Mammary epithelial cell (primary cell): ENCODE measurements at regions of chr13 and their contacts with region 1.

Region 1: GRCh38 chr13:79018166-79018565 is 359.2 kb upstream of the OBI1 start:
- DNase-seq: peak; percentile 25
- H3K4me3 ChIP-seq: no peak overlapping the region
- H3K27ac ChIP-seq: no peak overlapping the region
- H3K4me1 ChIP-seq: no peaks in the 10 kb centered on the region
- H3K27me3 ChIP-seq: no peaks in the 10 kb centered on the region
- CTCF ChIP-seq: no peak

Region 2: DNA sequence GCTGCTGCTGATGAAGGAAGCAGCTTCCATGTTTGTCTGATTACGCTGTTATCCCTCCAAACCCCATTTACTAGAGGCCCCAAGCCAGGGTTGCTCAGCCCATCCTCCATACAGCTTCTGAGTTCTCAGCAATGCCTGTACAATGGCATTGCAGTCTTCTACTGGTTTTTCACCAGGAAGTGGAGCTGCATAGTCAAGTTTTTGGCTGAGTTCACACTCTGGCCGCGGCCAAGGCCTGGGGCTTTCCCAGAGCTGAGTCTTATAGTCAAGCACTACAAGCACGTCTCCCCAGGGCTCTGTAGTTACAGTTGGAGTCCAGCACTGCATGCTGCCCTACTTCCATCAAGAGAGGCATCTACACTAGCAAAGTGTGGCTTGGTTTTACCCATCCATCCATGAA is 597.4 kb before region 1 on chr13:
- CTCF ChIA-PET with region 1: no interaction called
- dilution Hi-C with region 1: no loop called
- in situ Hi-C with region 1: no loop called
- intact Hi-C with region 1: no loop called
- DNase-seq: no peak
- H3K4me3 ChIP-seq: no peak overlapping the region
- H3K27ac ChIP-seq: no peak overlapping the region
- H3K4me1 ChIP-seq: no peaks in the 10 kb centered on the region
- H3K27me3 ChIP-seq: no peaks in the 10 kb centered on the region
- CTCF ChIP-seq: no peak

Region 3: DNA sequence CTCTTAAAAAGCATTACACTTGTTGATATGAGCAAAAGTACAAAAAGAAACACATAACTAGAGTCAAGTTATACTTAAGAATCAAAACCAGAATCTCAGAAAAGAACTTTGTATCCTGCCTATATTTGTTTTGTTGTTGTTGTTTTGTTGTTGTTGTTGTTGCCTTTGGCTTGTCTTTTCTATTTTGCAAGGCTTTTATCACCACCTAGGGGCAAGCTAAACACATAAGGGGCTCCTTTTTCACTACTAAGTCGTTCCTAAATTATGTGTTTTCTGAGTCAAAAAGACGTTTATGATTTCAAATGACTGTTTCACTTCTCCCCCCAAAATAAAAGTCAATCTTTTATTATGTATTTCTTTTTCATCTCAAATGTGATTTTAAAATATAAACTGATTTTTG is 137.7 kb after region 1 on chr13:
- CTCF ChIA-PET with region 1: no interaction called
- dilution Hi-C with region 1: no loop called
- in situ Hi-C with region 1: no loop called
- intact Hi-C with region 1: loop called (anchors 10 kb)
- DNase-seq: no peak
- H3K4me3 ChIP-seq: no peak overlapping the region
- H3K27ac ChIP-seq: no peak overlapping the region
- H3K4me1 ChIP-seq: no peaks in the 10 kb centered on the region
- H3K27me3 ChIP-seq: peaks cover 2% of the 10 kb centered on the region
- CTCF ChIP-seq: peak in 1 of 2 donors; percentile 17

Region 4: GRCh38 chr13:79246578-79246949 is 228.4 kb after region 1 on chr13:
- CTCF ChIA-PET with region 1: no interaction called
- dilution Hi-C with region 1: no loop called
- in situ Hi-C with region 1: no loop called
- intact Hi-C with region 1: loop called (anchors 1 kb)
- DNase-seq: no peak
- H3K4me3 ChIP-seq: no peak overlapping the region
- H3K27ac ChIP-seq: no peak overlapping the region
- H3K4me1 ChIP-seq: no peaks in the 10 kb centered on the region
- H3K27me3 ChIP-seq: no peaks in the 10 kb centered on the region
- CTCF ChIP-seq: peak; percentile 17 to 41